Stomach (tissue), 19 donors: ENCODE measurements at regions of chr12 and their contacts with region 1.

Region 1: DNA sequence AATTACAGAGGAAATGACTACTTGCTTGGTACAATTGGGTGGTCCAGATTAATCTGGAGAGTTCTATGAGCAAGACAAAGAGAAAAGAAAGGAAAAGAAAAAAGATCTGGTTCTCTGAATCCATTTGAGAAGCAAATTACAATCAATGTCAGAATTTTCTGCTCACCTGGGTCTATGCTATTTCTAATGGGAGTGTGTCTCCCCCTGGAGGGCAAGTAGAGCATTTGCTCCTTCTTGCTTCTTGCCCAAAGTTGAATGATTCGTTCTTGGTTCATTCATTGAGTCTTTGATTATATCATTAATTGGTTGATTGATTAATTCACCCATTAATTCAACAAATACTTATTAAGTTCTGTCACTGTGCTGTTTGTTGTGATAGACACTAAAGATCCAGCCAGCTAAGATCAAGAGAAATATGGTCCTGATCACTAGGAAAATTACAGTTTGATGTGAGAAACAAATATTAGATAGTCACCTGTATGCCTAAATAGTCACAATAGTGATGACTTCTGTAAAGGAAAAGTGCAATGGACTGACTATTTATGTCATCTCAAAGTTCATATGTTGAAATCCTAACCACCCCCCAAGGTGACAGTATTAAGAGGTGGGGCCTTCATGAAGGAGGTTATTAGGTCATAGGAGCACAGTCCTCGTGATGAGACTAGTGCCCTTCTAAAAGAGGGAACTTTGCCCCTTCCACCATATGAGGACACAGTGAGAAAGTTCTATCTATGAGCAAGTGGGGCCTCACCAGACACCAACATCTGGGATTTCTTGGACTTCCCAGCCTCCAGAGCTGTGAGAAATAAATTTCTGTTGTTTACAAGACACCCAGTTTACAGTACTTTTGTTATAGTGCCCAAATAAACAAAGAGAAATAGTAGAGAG is 8.0 kb upstream of the ASB8 start:
- DNase-seq: peak in 1 of 2 donors; percentile 89
- H3K4me3 ChIP-seq: no peak overlapping the region
- H3K27ac ChIP-seq: no peak overlapping the region
- H3K4me1 ChIP-seq: no peaks in the 10 kb centered on the region
- H3K27me3 ChIP-seq: peaks cover 0 to 24% (median 0%) of the 10 kb centered on the region in 3 donors
- CTCF ChIP-seq: peak in 5 of 7 experiments; percentile 61 to 88 (median 83)
- EP300 ChIP-seq: no peak
- POLR2A ChIP-seq: no peak

Region 2: DNA sequence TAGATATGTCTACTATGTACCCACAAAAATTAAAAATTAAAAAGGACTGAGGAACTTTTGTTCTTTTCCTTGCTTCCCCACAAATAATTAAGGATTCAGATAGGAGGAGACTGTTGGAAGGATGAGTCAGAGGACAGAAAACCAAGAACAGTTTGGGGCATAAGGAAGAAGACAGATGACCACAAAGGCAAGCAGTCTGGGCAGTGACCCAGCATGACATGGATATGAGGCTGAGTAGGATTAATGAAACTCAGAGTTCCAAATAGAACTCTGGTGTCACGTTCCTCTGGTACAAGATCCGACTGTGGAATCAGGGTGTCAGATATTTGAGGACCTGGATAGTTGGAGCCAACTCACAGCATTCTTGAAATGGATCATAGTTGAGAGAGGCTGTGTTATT is 1250.3 kb before region 1 on chr12:
- intact Hi-C with region 1: no loop called
- DNase-seq: peak in 1 of 2 donors; percentile 38
- H3K4me3 ChIP-seq: no peak overlapping the region
- H3K27ac ChIP-seq: no peak overlapping the region
- H3K4me1 ChIP-seq: no peaks in the 10 kb centered on the region
- H3K27me3 ChIP-seq: no peaks in the 10 kb centered on the region
- CTCF ChIP-seq: no peak
- EP300 ChIP-seq: no peak
- POLR2A ChIP-seq: no peak

Region 3: GRCh38 chr12:47949441-47950308 is 215.7 kb before region 1 on chr12:
- intact Hi-C with region 1: loop called (anchors 10 kb)
- DNase-seq: peak; percentile 80 to 87
- H3K4me3 ChIP-seq: no peak overlapping the region
- H3K27ac ChIP-seq: no peak overlapping the region
- H3K4me1 ChIP-seq: peaks cover 4 to 23% (median 13%) of the 10 kb centered on the region in 4 donors
- H3K27me3 ChIP-seq: no peaks in the 10 kb centered on the region
- CTCF ChIP-seq: peak in 5 of 7 experiments; percentile 51 to 82 (median 73)
- EP300 ChIP-seq: no peak
- POLR2A ChIP-seq: no peak

Region 4: DNA sequence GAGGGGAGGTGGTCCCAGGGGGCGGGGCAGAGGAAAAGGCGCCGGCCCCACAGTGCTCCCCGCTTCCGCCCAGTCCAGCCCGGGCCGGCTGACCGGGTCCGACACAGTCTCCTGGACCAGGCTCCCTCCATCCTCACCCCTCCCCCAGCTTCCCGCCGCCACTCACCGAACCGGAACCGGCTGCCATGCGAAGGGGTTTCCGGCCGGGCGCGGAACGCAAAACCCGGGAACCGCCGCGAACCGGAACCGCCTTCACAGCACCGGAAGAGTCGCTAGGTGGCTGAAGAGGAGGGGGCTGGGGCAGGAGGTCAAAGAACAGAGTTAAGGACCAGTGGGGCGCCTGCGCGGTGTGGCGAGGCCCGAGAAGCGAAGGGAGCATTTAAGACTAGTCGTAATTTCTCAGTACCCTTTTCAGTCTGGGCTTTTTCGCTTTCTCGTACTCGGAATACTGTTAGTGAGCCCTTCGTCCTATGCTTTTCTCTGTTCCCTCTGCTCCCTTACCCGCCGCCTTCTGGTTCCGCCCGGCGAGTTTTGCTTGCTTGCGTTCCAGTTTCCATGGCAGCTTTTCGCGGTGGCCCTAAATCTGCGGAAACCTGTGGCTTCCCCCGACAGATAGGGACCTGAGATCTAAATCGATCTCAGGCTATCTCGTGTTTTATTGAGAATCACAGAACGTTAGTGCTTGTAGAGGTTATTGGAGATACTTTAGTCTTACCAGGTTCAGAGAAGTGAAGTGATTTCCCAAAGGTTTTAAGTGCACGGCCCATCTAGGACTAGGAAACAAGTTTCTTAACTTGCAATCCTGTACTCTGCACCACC is 59.3 kb before region 1 on chr12 and contains the start of gene SENP1:
- intact Hi-C with region 1: loop called (anchors 10 kb)
- DNase-seq: peak; percentile 88 to 96
- H3K4me3 ChIP-seq: peak within 1 kb of the TSS; percentile 75 to 99 (median 91)
- H3K27ac ChIP-seq: peak within 1 kb of the TSS; percentile 81 to 93 (median 91)
- H3K4me1 ChIP-seq: peaks cover 17 to 41% (median 22%) of the 10 kb centered on the region in 4 donors
- H3K27me3 ChIP-seq: no peaks in the 10 kb centered on the region
- CTCF ChIP-seq: peak in 4 of 7 experiments; percentile 13 to 63 (median 26)
- EP300 ChIP-seq: no peak
- POLR2A ChIP-seq: no peak
- total RNA-seq, gene SENP1: 8.4 to 27.5 (median 14.2) TPM

Region 5: DNA sequence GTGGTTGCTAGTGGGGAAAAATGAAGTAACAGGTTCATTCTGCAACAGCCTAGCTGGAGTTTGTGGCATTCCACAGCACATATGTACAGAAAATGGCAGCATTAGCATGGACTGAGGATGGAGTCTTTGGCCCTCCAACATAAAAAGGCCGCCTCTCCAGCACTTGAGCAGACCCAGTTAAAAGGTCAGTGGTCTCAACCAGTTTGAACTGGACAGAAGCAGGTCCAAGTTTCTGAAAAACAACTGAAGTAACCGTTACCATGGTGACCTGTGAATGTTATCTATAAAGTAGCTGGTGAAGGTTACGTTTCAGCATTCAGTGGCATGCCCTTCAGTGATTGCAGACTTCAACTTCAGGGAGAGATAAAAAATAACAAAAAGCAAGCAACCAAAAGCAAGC is 71.8 kb after region 1 on chr12:
- intact Hi-C with region 1: no loop called
- DNase-seq: peak in 1 of 2 donors; percentile 68
- H3K4me3 ChIP-seq: no peak overlapping the region
- H3K27ac ChIP-seq: no peak overlapping the region
- H3K4me1 ChIP-seq: no peaks in the 10 kb centered on the region
- H3K27me3 ChIP-seq: no peaks in the 10 kb centered on the region
- CTCF ChIP-seq: no peak
- EP300 ChIP-seq: no peak
- POLR2A ChIP-seq: no peak